ENCODE measurements at regions of chr18 and their contacts with region 1.

Region 1: DNA sequence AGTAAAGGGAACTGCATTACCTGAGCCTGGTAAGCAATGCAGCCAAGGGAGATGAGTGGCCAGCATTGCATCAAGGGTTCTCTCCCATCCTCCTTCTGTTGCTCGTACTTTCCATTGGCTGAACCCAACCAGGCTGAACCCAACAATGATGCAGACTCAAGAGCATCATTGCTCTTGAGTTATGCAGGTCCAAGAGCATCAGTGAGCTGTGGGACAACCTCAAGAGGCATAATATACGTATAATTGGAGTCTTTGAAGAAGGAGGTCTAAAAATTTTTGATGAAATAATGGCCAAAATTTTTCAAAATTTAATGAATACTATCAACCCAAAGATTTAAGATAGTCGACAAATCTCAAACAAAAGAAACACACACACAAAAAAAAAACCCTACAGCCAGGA is 213.0 kb downstream of the RNF152 start:
- DNase-seq: no peak
- ATAC-seq: no peak
- H3K4me3 Mint-ChIP-seq: no peak overlapping the region
- H3K27ac Mint-ChIP-seq: no peak overlapping the region
- H3K4me1 Mint-ChIP-seq: no peaks in the 10 kb centered on the region
- H3K27me3 Mint-ChIP-seq: peaks cover 4% of the 10 kb centered on the region
- CTCF ChIP-seq: no peak

Region 2: DNA sequence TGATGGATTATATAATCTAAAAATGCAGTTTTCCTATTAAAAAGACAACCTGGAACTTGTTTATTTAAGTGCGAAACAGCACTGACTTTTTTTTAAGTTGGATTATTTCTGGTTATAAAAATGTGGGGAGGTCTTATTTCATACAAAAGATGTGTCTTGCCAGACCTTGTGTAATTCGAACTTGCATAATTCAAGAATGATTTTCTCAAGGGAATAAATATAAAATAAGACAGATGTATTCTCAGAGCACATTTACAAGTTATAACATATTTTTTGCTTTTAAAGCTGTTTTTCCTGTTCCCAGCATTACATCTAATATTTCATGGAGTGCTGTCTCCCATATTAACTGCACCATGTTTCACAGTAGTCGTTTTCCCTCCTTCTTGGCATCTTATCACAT is 83.5 kb before region 1 on chr18:
- CTCF ChIA-PET with region 1: no interaction called
- POLR2A ChIA-PET with region 1: no interaction called
- intact Hi-C with region 1: no loop called
- DNase-seq: no peak
- ATAC-seq: no peak
- H3K4me3 Mint-ChIP-seq: no peak overlapping the region
- H3K27ac Mint-ChIP-seq: no peak overlapping the region
- H3K4me1 Mint-ChIP-seq: no peaks in the 10 kb centered on the region
- H3K27me3 Mint-ChIP-seq: peaks cover 9% of the 10 kb centered on the region
- CTCF ChIP-seq: no peak

Region 3: GRCh38 chr18:61628085-61628484 is 51.8 kb before region 1 on chr18:
- CTCF ChIA-PET with region 1: no interaction called
- POLR2A ChIA-PET with region 1: no interaction called
- intact Hi-C with region 1: loop called (anchors 10 kb)
- DNase-seq: no peak
- ATAC-seq: no peak
- H3K4me3 Mint-ChIP-seq: no peak overlapping the region
- H3K27ac Mint-ChIP-seq: no peak overlapping the region
- H3K4me1 Mint-ChIP-seq: no peaks in the 10 kb centered on the region
- H3K27me3 Mint-ChIP-seq: peaks cover 9% of the 10 kb centered on the region
- CTCF ChIP-seq: no peak

Region 4: DNA sequence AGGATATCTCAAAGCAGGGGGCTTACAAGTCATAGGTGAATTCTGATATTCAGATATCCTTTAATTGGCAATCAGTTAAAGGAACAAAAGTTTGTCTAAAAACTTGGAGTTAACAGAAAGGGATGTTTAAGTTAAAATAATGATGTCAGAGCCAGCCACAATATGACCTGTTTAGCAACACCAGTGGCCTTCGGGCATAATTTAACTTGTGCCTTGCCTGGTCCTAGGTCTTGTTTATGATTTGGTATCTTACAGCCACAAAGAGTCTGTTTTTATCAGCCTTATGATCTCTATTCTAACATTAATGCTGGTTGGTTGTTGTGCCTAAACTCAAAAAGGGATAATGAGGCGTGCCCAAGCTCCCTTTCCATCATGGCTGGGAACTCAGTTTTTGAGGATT is 39.9 kb before region 1 on chr18:
- CTCF ChIA-PET with region 1: no interaction called
- POLR2A ChIA-PET with region 1: no interaction called
- intact Hi-C with region 1: no loop called
- DNase-seq: no peak
- ATAC-seq: no peak
- H3K4me3 Mint-ChIP-seq: no peak overlapping the region
- H3K27ac Mint-ChIP-seq: no peak overlapping the region
- H3K4me1 Mint-ChIP-seq: peaks cover 3% of the 10 kb centered on the region
- H3K27me3 Mint-ChIP-seq: peaks cover 25% of the 10 kb centered on the region
- CTCF ChIP-seq: no peak

Region 5: DNA sequence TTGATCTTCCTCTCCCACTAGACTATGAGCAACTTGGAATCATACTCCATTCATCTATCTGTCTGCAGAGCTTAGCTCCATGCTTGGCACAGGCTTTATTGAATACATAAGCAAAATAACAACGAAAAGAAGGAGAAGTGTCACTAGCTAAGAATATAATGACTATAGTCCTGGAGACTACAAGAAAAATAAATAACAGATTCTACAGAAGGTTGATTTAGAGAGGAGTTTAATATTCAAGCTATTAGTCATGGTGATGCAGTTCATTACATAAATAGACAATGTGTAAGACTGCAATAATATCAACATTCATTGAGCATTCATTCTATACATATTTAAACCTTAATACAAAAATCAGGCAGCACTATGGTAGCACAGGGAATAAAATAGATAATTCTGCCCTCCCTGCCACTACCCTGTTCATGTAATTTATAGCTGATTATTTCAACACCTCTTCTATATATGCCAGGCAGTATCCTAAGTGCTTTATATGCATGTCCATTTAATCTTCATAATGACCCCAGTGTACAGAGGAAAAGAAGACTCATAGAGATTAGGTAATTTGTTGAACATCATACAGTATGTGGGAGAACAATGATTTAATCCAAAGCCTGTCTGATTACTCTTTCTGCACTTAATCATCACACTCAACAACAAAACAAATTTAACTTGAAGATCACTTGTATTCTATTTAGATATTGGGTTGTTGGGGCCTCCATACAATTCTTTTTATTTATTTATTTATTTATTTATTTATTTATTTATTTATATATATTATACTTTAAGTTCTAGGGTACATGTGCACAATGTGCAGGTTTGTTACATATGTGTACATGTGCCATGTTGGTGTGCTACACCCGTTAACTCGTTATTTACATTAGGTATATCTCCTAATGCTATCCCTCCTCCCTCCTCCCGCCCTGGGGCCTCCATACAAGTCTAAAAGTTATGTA is 47.7 kb after region 1 on chr18:
- CTCF ChIA-PET with region 1: no interaction called
- POLR2A ChIA-PET with region 1: no interaction called
- intact Hi-C with region 1: no loop called
- DNase-seq: no peak
- ATAC-seq: no peak
- H3K4me3 Mint-ChIP-seq: no peak overlapping the region
- H3K27ac Mint-ChIP-seq: no peak overlapping the region
- H3K4me1 Mint-ChIP-seq: no peaks in the 10 kb centered on the region
- H3K27me3 Mint-ChIP-seq: peaks cover 6% of the 10 kb centered on the region
- CTCF ChIP-seq: no peak